ENCODE measurements at regions of chr5 and their contacts with region 1.

Region 1: GRCh38 chr5:110625376-110625999 is 101.0 kb downstream of the TMEM232 start:
- DNase-seq: peak in 4 of 9 donors; percentile 18 to 41 (median 36)
- ATAC-seq: no peak
- H3K4me3 ChIP-seq: no peak overlapping the region
- H3K4me3 Mint-ChIP-seq: no peak overlapping the region
- H3K27ac ChIP-seq: no peak overlapping the region
- H3K27ac Mint-ChIP-seq: no peak overlapping the region
- H3K4me1 ChIP-seq: no peaks in the 10 kb centered on the region
- H3K4me1 Mint-ChIP-seq: no peaks in the 10 kb centered on the region
- H3K27me3 ChIP-seq: no peaks in the 10 kb centered on the region
- H3K27me3 Mint-ChIP-seq: peaks cover 0 to 11% (median 8%) of the 10 kb centered on the region in 5 donors

Region 2: GRCh38 chr5:108642167-108642906 is 1983.2 kb before region 1 on chr5:
- CTCF ChIA-PET with region 1: no interaction called
- POLR2A ChIA-PET with region 1: no interaction called
- intact Hi-C with region 1: loop called (anchors 1 to 5 kb)
- DNase-seq: peak in 8 of 9 donors; percentile 16 to 52 (median 32)
- ATAC-seq: peak; percentile 83
- H3K4me3 ChIP-seq: no peak overlapping the region
- H3K4me3 Mint-ChIP-seq: peak overlapping the region in 4 of 10 donors; percentile 4 to 73 (median 34)
- H3K27ac ChIP-seq: no peak overlapping the region
- H3K27ac Mint-ChIP-seq: peak overlapping the region in 1 of 9 donors; percentile 33
- H3K4me1 ChIP-seq: no peaks in the 10 kb centered on the region
- H3K4me1 Mint-ChIP-seq: peaks cover 0 to 4% (median 3%) of the 10 kb centered on the region in 7 donors
- H3K27me3 ChIP-seq: no peaks in the 10 kb centered on the region
- H3K27me3 Mint-ChIP-seq: peaks cover 0 to 8% (median 4%) of the 10 kb centered on the region in 5 donors

Region 3: DNA sequence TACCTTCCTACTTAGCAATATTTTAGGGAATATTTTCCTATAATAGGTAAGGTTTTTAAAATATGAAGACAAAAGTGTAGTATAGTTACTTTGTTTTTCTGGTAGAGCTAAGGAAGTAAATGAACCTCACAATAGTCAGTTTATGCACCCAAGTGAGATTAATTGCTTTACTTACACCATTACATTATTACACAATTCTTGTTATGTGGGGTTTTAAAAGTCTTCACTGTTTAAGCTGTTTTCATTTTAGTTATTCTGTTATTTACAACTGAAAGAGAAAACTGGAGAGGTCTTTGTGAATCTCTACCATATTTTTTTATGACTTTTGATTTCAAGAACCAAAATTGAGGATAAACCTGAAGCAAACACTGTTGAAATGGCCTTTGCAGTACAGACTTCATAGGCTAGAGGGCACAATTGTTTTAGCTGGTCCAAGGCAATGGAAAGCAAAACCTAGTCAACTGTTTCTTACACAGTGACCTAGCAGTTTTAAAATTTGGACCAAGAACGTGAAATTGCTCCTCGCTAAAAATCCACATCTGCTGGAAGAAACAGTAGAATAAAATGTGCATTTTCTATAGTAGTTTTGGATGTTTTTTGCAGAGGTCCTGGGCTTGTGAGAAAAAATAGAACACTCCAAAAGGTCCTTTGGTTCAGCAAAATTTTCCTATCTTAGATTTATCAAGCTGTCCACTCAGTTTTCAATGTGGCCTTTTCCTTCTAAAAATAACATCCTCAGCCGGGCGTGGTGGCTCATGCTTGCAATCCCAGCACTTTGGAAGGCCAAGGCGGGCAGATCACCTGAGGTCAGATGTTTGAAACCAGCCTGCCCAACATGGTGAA is 1944.2 kb before region 1 on chr5:
- CTCF ChIA-PET with region 1: no interaction called
- POLR2A ChIA-PET with region 1: no interaction called
- intact Hi-C with region 1: loop called in 1 of 2 experiments (anchors 1 kb)
- DNase-seq: peak in 6 of 9 donors; percentile 23 to 58 (median 44)
- ATAC-seq: peak; percentile 88
- H3K4me3 ChIP-seq: no peak overlapping the region
- H3K4me3 Mint-ChIP-seq: no peak overlapping the region
- H3K27ac ChIP-seq: no peak overlapping the region
- H3K27ac Mint-ChIP-seq: no peak overlapping the region
- H3K4me1 ChIP-seq: no peaks in the 10 kb centered on the region
- H3K4me1 Mint-ChIP-seq: no peaks in the 10 kb centered on the region
- H3K27me3 ChIP-seq: no peaks in the 10 kb centered on the region
- H3K27me3 Mint-ChIP-seq: peaks cover 0 to 9% (median 0%) of the 10 kb centered on the region in 5 donors

Region 4: DNA sequence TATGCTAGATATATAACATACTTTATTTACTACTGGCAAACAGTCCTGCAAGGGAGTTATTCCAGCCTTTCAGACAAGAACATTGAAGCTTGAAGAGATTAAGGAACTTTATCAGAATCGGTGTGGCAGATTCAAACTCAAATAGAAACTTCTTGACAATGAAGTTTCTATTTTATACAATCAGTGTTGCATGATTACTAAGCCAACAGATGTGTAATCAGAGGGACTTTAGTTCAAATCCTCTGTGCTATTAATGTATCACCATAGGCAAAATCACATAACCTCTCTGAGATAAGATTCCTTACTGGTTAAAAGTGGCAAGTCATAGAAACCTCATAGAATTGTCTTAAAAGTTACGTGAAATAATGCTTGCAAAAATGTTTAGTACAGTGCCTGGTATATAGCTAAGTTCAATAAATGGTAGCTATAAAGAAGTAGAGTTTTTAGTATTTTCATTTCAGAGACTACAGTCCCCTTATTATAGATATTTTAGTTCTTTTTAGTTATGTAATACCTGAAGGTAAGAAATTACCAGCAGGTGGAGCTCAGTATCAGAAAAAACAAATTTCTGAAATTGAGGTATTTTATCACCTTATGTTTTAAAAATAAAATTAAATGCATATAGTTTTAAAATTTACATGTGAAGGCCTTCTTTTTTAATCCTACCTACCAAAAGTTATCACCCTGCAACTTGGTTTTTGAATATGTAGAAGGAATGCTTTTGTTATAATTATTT is 1705.7 kb before region 1 on chr5:
- CTCF ChIA-PET with region 1: no interaction called
- POLR2A ChIA-PET with region 1: no interaction called
- intact Hi-C with region 1: loop called in 1 of 2 experiments (anchors 10 kb)
- DNase-seq: peak in 2 of 9 donors; percentile 0 to 3
- ATAC-seq: no peak
- H3K4me3 ChIP-seq: no peak overlapping the region
- H3K4me3 Mint-ChIP-seq: no peak overlapping the region
- H3K27ac ChIP-seq: no peak overlapping the region
- H3K27ac Mint-ChIP-seq: no peak overlapping the region
- H3K4me1 ChIP-seq: no peaks in the 10 kb centered on the region
- H3K4me1 Mint-ChIP-seq: peaks cover 0 to 5% (median 0%) of the 10 kb centered on the region in 7 donors
- H3K27me3 ChIP-seq: no peaks in the 10 kb centered on the region
- H3K27me3 Mint-ChIP-seq: no peaks in the 10 kb centered on the region

Region 5: DNA sequence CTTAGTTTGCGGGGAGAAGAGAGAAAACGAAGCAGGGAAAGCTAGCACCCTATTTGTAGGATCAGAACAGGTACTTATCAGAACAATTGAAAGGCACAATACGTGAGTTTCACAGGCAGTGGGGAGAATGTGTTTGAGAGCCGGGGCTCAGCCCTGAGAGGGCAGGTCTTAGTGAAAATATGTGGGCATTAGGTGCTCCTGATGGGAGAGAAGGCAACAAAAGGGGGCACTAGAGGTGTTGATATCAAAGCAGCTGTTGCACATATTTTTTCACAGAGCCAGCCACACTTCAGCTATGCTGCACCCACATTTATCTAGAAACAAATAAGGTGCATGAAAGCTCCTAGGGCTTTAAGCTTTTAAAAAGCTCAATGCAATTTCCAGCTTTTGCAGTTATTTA is 1035.5 kb before region 1 on chr5:
- CTCF ChIA-PET with region 1: interaction called, 3 read pairs
- POLR2A ChIA-PET with region 1: no interaction called
- intact Hi-C with region 1: loop called in 1 of 2 experiments (anchors 1 kb)
- DNase-seq: peak in 5 of 9 donors; percentile 7 to 39 (median 12)
- ATAC-seq: peak; percentile 54
- H3K4me3 ChIP-seq: no peak overlapping the region
- H3K4me3 Mint-ChIP-seq: no peak overlapping the region
- H3K27ac ChIP-seq: no peak overlapping the region
- H3K27ac Mint-ChIP-seq: peak overlapping the region in 2 of 9 donors; percentile 38 to 47
- H3K4me1 ChIP-seq: no peaks in the 10 kb centered on the region
- H3K4me1 Mint-ChIP-seq: peaks cover 0 to 16% (median 10%) of the 10 kb centered on the region in 7 donors
- H3K27me3 ChIP-seq: no peaks in the 10 kb centered on the region
- H3K27me3 Mint-ChIP-seq: peaks cover 0 to 2% (median 0%) of the 10 kb centered on the region in 5 donors

Region 6: GRCh38 chr5:110045158-110045557 is 580.3 kb before region 1 on chr5:
- CTCF ChIA-PET with region 1: no interaction called
- POLR2A ChIA-PET with region 1: no interaction called
- intact Hi-C with region 1: loop called in 1 of 2 experiments (anchors 10 kb)
- DNase-seq: no peak
- ATAC-seq: no peak
- H3K4me3 ChIP-seq: no peak overlapping the region
- H3K4me3 Mint-ChIP-seq: no peak overlapping the region
- H3K27ac ChIP-seq: no peak overlapping the region
- H3K27ac Mint-ChIP-seq: peak overlapping the region in 1 of 9 donors; percentile 15
- H3K4me1 ChIP-seq: no peaks in the 10 kb centered on the region
- H3K4me1 Mint-ChIP-seq: peaks cover 3 to 21% (median 11%) of the 10 kb centered on the region in 7 donors
- H3K27me3 ChIP-seq: no peaks in the 10 kb centered on the region
- H3K27me3 Mint-ChIP-seq: peaks cover 0 to 4% (median 0%) of the 10 kb centered on the region in 5 donors

Region 7: DNA sequence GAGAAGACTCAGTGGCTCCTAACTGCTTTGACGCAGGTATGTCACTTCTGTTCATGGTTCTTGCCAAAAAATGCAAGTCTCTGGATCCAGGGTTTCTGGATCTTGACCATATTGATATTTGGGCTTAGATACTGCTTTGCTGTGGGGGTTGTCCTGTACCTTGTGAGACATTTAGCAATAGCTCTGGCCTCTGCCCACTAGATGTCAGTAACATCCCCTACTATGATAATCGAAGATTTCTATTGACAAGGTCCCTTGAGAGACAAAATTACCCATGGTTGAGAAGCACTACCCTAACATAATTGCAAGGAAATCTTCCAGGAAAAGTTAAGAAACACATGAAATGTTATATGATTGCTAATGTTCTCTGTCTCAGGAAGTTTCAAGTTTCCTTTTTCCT is 184.5 kb before region 1 on chr5:
- CTCF ChIA-PET with region 1: no interaction called
- POLR2A ChIA-PET with region 1: no interaction called
- intact Hi-C with region 1: loop called in 1 of 2 experiments (anchors 1 kb)
- DNase-seq: no peak
- ATAC-seq: no peak
- H3K4me3 ChIP-seq: no peak overlapping the region
- H3K4me3 Mint-ChIP-seq: no peak overlapping the region
- H3K27ac ChIP-seq: no peak overlapping the region
- H3K27ac Mint-ChIP-seq: no peak overlapping the region
- H3K4me1 ChIP-seq: no peaks in the 10 kb centered on the region
- H3K4me1 Mint-ChIP-seq: no peaks in the 10 kb centered on the region
- H3K27me3 ChIP-seq: no peaks in the 10 kb centered on the region
- H3K27me3 Mint-ChIP-seq: peaks cover 0 to 16% (median 6%) of the 10 kb centered on the region in 5 donors